ENCODE measurements at regions of chr12 and their contacts with region 1.

Region 1: DNA sequence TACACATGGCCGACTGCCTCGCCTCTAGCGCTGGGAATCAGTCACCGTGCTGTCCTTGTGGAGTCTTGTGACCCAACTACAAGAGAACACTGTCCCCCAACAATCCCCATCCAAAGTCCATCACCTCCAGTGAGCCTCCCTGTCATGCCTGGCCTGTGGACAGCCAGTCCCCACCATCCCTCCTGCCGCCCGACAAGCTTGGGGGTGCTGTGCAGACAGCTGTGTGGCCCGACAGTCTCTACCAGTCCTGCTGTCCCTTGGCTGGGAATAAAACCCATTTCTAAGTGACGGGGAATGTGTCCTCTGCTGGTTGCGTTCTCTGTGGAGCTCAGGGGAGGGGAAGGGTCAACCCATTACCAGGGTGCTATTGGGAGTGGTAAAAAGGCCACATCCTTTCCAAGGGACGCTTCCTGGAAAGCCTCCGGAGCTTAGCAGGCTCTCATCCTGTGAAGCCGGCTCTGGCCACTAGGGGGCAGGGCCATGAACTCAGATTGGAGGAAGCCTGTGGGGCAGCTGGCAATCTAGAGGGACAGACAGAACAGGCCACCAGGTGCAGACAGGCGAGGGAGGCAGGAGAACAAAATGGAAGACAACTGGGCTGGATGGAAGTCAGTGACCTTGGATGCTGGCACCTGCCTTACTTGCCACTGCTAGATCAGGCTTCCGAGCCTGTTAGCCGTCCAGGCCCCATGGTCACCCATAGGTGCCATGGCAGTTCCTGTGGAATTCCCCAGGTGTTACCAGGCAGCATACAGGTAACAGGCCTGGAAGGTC is 12.0 kb upstream of the BLTP3B start:
- DNase-seq: peak; percentile 84
- ATAC-seq: peak; percentile 59 to 68
- H3K4me3 ChIP-seq: no peak overlapping the region
- H3K27ac ChIP-seq: no peak overlapping the region
- H3K4me1 ChIP-seq: no peaks in the 10 kb centered on the region
- H3K27me3 ChIP-seq: no peaks in the 10 kb centered on the region
- CTCF ChIP-seq: peak; percentile 85

Region 2: DNA sequence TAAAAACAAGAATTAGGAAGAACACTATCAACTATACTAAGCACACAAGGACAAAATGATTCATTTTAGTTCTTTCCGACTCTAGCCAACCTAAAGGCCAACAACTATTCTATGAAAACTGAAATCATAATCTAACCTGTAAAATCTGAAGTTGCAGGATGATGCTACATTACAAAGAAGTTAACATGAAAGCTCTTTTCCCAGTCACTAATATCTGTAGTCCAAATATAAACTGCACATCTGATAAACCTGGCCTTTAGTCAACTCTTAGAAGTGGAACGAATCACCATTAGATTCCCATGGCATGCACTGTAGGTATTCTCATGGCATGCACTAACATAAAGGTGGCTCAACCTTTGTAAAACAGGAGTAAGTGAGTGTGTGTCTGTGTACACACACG is 53.7 kb before region 1 on chr12:
- intact Hi-C with region 1: loop called (anchors 10 kb)
- DNase-seq: no peak
- ATAC-seq: no peak
- H3K4me3 ChIP-seq: no peak overlapping the region
- H3K27ac ChIP-seq: no peak overlapping the region
- H3K4me1 ChIP-seq: no peaks in the 10 kb centered on the region
- H3K27me3 ChIP-seq: no peaks in the 10 kb centered on the region
- CTCF ChIP-seq: no peak

Measured in lower lobe of right lung (tissue), 2 donors.